ENCODE measurements at regions of chr3 and their contacts with region 1.

Region 1: GRCh38 chr3:54374214-54374855 is 252.0 kb downstream of the CACNA2D3 start:
- DNase-seq: peak; percentile 26
- H3K4me3 Mint-ChIP-seq: no peak overlapping the region
- H3K27ac Mint-ChIP-seq: no peak overlapping the region
- H3K4me1 Mint-ChIP-seq: no peaks in the 10 kb centered on the region
- H3K27me3 Mint-ChIP-seq: peaks cover 7% of the 10 kb centered on the region

Region 2: GRCh38 chr3:53938645-53939044 is 435.7 kb before region 1 on chr3:
- CTCF ChIA-PET with region 1: interaction called, 19 read pairs
- intact Hi-C with region 1: loop called (anchors 1 kb)
- DNase-seq: peak; percentile 55
- H3K4me3 Mint-ChIP-seq: no peak overlapping the region
- H3K27ac Mint-ChIP-seq: no peak overlapping the region
- H3K4me1 Mint-ChIP-seq: no peaks in the 10 kb centered on the region
- H3K27me3 Mint-ChIP-seq: peaks cover 24% of the 10 kb centered on the region

Region 3: DNA sequence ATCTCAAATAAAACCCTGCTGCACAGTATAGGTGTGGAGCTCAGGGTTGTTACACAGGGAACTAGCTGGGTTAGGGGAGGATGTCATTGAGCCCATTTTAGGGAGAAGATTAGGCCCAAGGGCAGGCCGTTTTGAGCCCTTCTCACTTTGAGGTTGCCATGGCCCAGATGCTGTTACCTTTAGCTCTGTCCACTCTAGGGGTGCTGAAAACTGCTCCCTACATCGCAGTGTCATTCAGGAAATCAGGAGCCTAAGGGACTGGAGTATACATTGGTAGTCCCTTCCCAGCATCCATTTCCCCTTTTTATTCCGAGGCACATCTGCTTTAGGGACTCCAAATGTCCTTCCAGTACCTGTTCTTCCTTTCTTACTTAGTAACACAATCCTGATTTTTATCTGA is 403.7 kb before region 1 on chr3:
- CTCF ChIA-PET with region 1: no interaction called
- intact Hi-C with region 1: no loop called
- DNase-seq: no peak
- H3K4me3 Mint-ChIP-seq: no peak overlapping the region
- H3K27ac Mint-ChIP-seq: no peak overlapping the region
- H3K4me1 Mint-ChIP-seq: no peaks in the 10 kb centered on the region
- H3K27me3 Mint-ChIP-seq: peaks cover 4% of the 10 kb centered on the region

Region 4: GRCh38 chr3:54353547-54354339 is 20.6 kb before region 1 on chr3:
- CTCF ChIA-PET with region 1: no interaction called
- intact Hi-C with region 1: no loop called
- DNase-seq: no peak
- H3K4me3 Mint-ChIP-seq: no peak overlapping the region
- H3K27ac Mint-ChIP-seq: no peak overlapping the region
- H3K4me1 Mint-ChIP-seq: no peaks in the 10 kb centered on the region
- H3K27me3 Mint-ChIP-seq: peaks cover 11% of the 10 kb centered on the region

Measured in activated naive CD4-positive, alpha-beta T cell treated with anti-CD3 and anti-CD28 coated beads for 36 hours (primary cell).